ENCODE measurements at regions of chr4 and their contacts with region 1.

Region 1: GRCh38 chr4:120352739-120353138 is 286.1 kb upstream of the MAD2L1 start:
- DNase-seq: no peak
- ATAC-seq: no peak
- H3K4me3 ChIP-seq: no peak overlapping the region
- H3K4me3 Mint-ChIP-seq: no peak overlapping the region
- H3K27ac ChIP-seq: no peak overlapping the region
- H3K27ac Mint-ChIP-seq: no peak overlapping the region
- H3K4me1 ChIP-seq: no peaks in the 10 kb centered on the region
- H3K4me1 Mint-ChIP-seq: no peaks in the 10 kb centered on the region
- H3K27me3 ChIP-seq: no peaks in the 10 kb centered on the region
- H3K27me3 Mint-ChIP-seq: no peaks in the 10 kb centered on the region
- CTCF ChIP-seq: no peak

Region 2: GRCh38 chr4:120299631-120300030 is 53.1 kb before region 1 on chr4:
- CTCF ChIA-PET with region 1: no interaction called
- POLR2A ChIA-PET with region 1: no interaction called
- intact Hi-C with region 1: no loop called
- DNase-seq: no peak
- ATAC-seq: no peak
- H3K4me3 ChIP-seq: no peak overlapping the region
- H3K4me3 Mint-ChIP-seq: no peak overlapping the region
- H3K27ac ChIP-seq: no peak overlapping the region
- H3K27ac Mint-ChIP-seq: no peak overlapping the region
- H3K4me1 ChIP-seq: no peaks in the 10 kb centered on the region
- H3K4me1 Mint-ChIP-seq: no peaks in the 10 kb centered on the region
- H3K27me3 ChIP-seq: no peaks in the 10 kb centered on the region
- H3K27me3 Mint-ChIP-seq: no peaks in the 10 kb centered on the region
- CTCF ChIP-seq: no peak

Region 3: GRCh38 chr4:120317713-120318112 is 35.0 kb before region 1 on chr4:
- CTCF ChIA-PET with region 1: no interaction called
- POLR2A ChIA-PET with region 1: no interaction called
- intact Hi-C with region 1: no loop called
- DNase-seq: no peak
- ATAC-seq: no peak
- H3K4me3 ChIP-seq: no peak overlapping the region
- H3K4me3 Mint-ChIP-seq: no peak overlapping the region
- H3K27ac ChIP-seq: no peak overlapping the region
- H3K27ac Mint-ChIP-seq: no peak overlapping the region
- H3K4me1 ChIP-seq: no peaks in the 10 kb centered on the region
- H3K4me1 Mint-ChIP-seq: no peaks in the 10 kb centered on the region
- H3K27me3 ChIP-seq: no peaks in the 10 kb centered on the region
- H3K27me3 Mint-ChIP-seq: no peaks in the 10 kb centered on the region
- CTCF ChIP-seq: no peak

Region 4: DNA sequence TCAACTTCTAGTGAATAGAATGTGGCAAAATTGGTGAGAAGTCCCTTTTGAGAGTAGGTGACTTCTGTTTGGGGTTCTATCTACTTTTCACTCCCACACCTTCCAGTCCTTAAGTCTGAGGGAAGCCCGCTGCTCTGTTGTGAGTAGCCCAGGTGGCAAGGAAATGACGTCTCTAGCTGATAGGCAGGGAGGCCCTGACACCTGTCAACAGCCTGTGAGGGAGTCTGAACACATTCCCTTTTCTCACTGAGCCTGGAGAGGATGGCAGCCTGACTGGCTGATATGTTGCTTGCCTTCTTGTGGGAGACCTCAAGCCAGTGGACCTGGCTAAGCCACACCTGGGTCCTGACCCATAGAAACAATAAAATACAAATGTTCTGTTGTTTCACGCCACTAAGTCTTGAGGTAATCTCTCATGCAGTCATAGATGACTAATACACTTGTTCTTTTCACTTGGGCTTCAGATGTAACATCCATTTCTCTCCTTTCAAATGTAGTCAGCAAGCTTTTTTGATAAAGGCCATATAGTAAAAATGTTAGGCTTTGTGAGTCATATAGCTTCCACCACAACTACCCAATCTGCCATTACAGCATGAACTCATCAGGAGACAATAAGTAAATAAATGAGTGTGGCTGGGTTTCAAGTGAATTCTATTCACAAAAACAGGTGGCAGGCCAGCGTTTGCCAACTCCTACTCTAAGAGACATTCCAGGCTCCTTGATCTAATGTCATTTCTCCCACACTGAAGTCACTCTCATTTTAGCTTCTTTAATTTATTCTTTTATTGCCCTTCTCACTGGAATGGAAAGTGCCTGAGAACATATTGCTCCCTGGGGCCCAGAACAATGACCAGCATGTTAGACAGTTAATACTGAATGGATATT is 21.0 kb before region 1 on chr4:
- CTCF ChIA-PET with region 1: no interaction called
- POLR2A ChIA-PET with region 1: no interaction called
- intact Hi-C with region 1: loop called in 1 of 2 experiments (anchors 1 kb)
- DNase-seq: no peak
- ATAC-seq: no peak
- H3K4me3 ChIP-seq: no peak overlapping the region
- H3K4me3 Mint-ChIP-seq: no peak overlapping the region
- H3K27ac ChIP-seq: no peak overlapping the region
- H3K27ac Mint-ChIP-seq: no peak overlapping the region
- H3K4me1 ChIP-seq: no peaks in the 10 kb centered on the region
- H3K4me1 Mint-ChIP-seq: no peaks in the 10 kb centered on the region
- H3K27me3 ChIP-seq: no peaks in the 10 kb centered on the region
- H3K27me3 Mint-ChIP-seq: peaks cover 5% of the 10 kb centered on the region
- CTCF ChIP-seq: no peak

Measured in CD4-positive, alpha-beta T cell (primary cell).